ENCODE measurements at regions of chr4 and their contacts with region 1.

Region 1: DNA sequence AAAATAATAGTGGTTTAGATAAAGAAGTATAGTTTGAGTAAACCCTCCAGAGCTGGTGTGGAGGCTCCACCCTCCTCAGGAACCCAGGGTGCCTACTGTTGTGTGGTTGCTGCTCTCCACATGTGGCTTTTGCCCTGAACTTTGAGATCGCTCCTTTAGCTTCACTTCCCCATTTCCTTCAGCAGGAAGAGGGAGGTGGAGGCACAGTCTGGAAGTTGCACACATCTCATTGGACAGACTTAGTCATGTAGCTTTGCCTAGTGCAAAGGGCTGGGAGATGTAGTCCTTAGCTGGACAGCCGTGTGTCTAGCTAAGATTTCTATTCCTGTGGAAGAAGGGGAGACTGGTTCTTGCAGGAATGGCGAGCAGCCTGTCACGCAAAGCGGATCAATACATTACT is 37.9 kb downstream of the RGS12 start:
- DNase-seq: no peak
- ATAC-seq: peak in 1 of 2 donors; percentile 46

Region 2: DNA sequence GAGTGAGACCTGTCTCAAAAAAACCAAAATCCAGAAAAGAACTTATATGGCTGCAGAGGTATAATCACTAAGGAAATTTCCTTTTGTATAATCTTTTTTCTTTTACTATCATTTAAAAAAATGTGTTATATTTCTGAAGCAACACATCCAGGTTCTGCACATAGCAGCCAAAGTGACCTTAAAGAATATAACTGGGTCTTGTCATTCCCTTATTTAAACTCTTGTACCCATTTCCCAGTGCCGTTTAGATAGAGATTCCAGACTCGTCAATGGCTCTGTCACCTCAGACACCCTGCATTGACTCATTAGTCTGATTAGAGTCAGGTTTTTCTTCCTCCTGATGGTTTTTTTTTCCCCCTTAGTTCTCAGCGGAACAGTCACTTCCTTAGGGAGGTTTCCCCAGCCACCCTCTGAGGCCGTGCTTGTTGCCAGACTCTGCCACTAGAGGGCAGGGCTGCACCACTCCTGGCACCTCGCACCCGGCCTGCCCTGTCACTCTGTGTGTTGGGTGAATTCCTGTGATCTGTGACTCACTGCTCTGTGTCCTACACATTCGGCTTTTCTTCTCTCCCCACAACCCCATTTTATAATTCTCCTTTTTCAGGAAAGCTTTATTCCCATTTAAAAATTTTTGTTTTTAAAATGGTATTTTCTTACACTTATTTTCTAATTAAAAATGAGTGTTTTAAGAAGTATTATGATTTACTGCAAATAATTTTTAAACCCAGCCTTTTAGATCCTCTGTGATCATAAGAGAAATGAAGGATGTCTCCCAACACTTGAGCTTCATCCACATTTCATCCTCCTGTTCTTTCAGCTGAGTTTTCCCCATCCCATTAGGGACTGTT is 224.1 kb before region 1 on chr4:
- intact Hi-C with region 1: loop called in 1 of 2 experiments (anchors 10 kb)
- DNase-seq: peak; percentile 88
- ATAC-seq: peak; percentile 99

Region 3: GRCh38 chr4:3402491-3403347 is 72.0 kb after region 1 on chr4:
- intact Hi-C with region 1: no loop called
- DNase-seq: peak; percentile 63
- ATAC-seq: peak; percentile 84 to 89